Sigmoid colon (tissue), 7 donors: ENCODE measurements at regions of chr11 and their contacts with region 1.

Region 1: GRCh38 chr11:57530596-57531507 is at the start of gene TIMM10:
- DNase-seq: peak; percentile 98
- H3K4me3 ChIP-seq: peak within 1 kb of the TSS; percentile 55 to 78 (median 60)
- H3K27ac ChIP-seq: peak within 1 kb of the TSS; percentile 61 to 78 (median 70)
- H3K4me1 ChIP-seq: peaks cover 0 to 18% (median 11%) of the 10 kb centered on the region in 4 donors
- H3K27me3 ChIP-seq: no peaks in the 10 kb centered on the region
- CTCF ChIP-seq: no peak
- EP300 ChIP-seq: no peak
- POLR2A ChIP-seq: peak in 1 of 2 donors; percentile 37
- total RNA-seq, gene TIMM10: 22.4 to 59.7 (median 33.0) TPM

Region 2: GRCh38 chr11:56910785-56911184 is 620.1 kb before region 1 on chr11:
- intact Hi-C with region 1: no loop called
- DNase-seq: no peak
- H3K4me3 ChIP-seq: no peak overlapping the region
- H3K27ac ChIP-seq: no peak overlapping the region
- H3K4me1 ChIP-seq: no peaks in the 10 kb centered on the region
- H3K27me3 ChIP-seq: no peaks in the 10 kb centered on the region
- CTCF ChIP-seq: no peak
- EP300 ChIP-seq: no peak
- POLR2A ChIP-seq: no peak

Region 3: DNA sequence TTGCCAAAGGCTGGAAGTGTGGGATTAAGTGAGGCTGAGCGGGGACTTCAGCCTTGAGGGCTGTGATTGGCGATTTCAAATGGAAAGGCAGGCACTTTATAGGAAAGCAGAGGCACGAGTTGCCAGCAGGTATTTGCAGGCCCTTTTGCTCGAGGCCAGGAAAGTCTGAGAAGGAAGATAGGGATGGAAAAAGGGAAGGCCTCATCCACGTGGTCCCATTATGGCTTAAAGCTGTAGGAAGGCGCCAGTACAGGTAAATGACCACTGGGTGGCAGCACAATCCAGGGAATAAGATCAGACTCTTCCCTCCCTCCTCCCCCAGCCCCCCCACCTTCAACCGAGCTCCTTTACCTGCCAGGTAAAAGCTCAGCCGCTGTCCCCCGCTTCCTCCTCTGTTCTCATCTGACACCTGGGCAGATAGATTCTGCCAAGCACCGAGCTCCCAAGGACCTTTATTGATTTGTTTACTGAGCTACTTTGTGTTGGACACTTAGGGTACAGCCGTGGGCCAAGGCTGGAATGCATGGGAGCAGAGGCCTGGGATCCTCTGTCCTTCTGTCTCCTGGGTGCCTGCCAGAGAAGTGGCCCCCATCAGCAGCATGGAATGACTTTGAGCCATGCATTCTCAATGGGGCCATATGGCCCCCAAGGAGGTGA is 185.2 kb before region 1 on chr11:
- intact Hi-C with region 1: loop called (anchors 2 kb)
- DNase-seq: peak; percentile 80
- H3K4me3 ChIP-seq: no peak overlapping the region
- H3K27ac ChIP-seq: no peak overlapping the region
- H3K4me1 ChIP-seq: peaks cover 0 to 7% (median 5%) of the 10 kb centered on the region in 4 donors
- H3K27me3 ChIP-seq: peaks cover 0 to 4% (median 0%) of the 10 kb centered on the region in 3 donors
- CTCF ChIP-seq: peak in 3 of 4 experiments; percentile 31 to 84 (median 46)
- EP300 ChIP-seq: no peak
- POLR2A ChIP-seq: no peak

Region 4: DNA sequence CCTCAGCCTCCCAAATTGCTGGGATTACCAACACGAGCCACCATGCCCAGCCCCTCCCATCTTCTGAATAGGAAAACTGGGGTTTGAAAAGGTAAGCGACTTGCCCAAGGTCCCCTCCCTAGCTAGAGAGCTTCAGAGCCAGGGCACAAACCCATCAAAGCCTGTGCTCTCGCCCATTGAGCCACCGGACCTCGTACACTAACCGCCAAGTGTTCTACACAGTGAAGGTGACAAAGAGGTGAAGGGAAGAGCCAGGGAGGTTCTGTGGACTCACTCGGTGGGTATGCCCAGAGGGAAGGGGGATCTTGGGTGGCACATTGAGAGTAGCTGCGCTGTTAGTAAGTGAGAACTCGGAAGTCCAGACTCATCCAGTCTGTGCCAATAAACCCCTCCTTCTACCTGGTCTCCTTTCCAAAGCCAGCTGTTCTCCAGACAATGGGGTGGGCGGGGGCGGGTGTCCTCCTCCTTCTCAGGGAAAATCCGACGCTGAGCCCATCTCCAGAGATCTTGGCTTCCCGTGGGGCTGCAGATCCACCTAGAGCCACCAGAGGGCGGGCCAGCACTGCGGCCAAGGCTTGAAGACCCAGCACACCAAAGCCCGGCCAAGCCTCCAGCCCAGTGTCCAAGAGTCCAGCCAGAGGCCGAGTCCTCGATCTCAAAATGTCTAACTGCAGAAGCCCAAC is 73.8 kb before region 1 on chr11:
- intact Hi-C with region 1: loop called (anchors 1 kb)
- DNase-seq: peak; percentile 94
- H3K4me3 ChIP-seq: no peak overlapping the region
- H3K27ac ChIP-seq: no peak overlapping the region
- H3K4me1 ChIP-seq: peaks cover 0 to 45% (median 42%) of the 10 kb centered on the region in 4 donors
- H3K27me3 ChIP-seq: peaks cover 34 to 60% (median 38%) of the 10 kb centered on the region in 3 donors
- CTCF ChIP-seq: peak; percentile 87 to 99 (median 92)
- EP300 ChIP-seq: no peak
- POLR2A ChIP-seq: no peak

Region 5: DNA sequence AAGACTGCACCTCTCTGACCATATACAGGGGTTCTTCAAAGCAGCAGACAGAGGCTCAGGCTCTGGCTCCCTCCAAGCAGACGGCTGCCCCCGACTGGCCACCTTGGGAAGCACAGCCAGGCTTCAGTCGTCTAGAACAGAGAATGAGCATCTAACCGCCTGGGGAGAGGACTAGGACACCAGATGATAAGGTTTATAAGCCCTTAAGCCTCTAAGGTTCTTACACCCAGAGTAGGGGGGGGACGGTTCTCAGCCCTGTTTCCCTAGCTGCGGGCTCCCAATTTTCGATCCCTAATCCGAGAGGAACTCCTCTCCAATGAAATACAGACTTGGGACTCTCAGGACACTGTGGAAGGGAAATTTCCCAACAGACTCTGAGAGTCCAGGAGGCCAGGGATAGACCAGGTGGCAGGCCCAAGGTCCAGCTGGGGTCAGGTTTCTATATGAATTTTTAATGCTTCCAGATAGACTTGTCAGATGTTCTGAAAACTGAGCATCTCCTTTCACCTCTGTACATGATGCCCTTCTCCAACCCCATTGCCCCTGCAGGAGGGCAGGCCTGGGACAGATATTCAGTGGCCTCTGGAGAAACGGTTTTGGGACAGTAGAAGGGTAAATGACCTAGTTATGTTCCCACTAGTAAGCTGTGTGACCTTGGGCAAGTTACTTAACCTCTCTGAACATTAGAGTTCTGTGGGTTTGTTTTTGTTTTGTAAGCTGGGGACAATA is 50.3 kb before region 1 on chr11:
- intact Hi-C with region 1: no loop called
- DNase-seq: no peak
- H3K4me3 ChIP-seq: no peak overlapping the region
- H3K27ac ChIP-seq: no peak overlapping the region
- H3K4me1 ChIP-seq: peaks cover 0 to 30% (median 24%) of the 10 kb centered on the region in 4 donors
- H3K27me3 ChIP-seq: peaks cover 15 to 46% (median 29%) of the 10 kb centered on the region in 3 donors
- CTCF ChIP-seq: peak in 3 of 4 experiments; percentile 36 to 60 (median 39)
- EP300 ChIP-seq: no peak
- POLR2A ChIP-seq: no peak

Region 6: GRCh38 chr11:57493507-57494503 is 37.0 kb before region 1 on chr11:
- intact Hi-C with region 1: loop called (anchors 1 kb)
- DNase-seq: peak; percentile 81
- H3K4me3 ChIP-seq: no peak overlapping the region
- H3K27ac ChIP-seq: no peak overlapping the region
- H3K4me1 ChIP-seq: peaks cover 2 to 6% (median 3%) of the 10 kb centered on the region in 4 donors
- H3K27me3 ChIP-seq: no peaks in the 10 kb centered on the region
- CTCF ChIP-seq: peak; percentile 58 to 89 (median 74)
- EP300 ChIP-seq: no peak
- POLR2A ChIP-seq: no peak

Region 7: DNA sequence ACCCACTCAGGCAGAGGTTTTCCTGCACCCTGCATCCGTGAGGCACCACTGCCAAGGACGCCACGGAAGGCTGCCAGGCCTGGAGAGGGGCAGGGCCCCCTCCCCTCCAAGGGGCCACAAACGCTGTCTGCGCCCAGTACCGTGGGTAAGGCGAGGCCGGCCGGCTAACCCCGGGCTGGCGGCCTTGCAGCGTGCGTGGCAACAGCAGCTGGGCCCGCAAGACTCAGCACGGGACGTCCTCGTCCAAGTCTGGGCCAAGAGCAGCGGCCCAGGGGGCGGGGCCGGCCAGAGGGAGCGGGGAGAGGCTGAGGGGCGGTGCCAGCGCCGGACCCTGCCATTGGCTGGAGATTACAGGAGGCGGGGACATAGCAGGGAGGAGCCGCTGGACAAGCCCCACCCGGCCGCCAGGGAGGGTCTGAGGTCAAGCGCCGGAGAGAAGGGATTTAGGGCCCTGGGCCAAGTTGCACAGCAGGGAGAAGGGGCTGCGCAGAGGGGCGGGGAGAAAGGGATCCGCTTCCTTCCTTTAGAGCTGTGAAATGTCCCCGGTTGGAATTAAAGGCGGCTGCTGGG is 31.4 kb before region 1 on chr11:
- intact Hi-C with region 1: loop called (anchors 2 kb)
- DNase-seq: peak; percentile 99
- H3K4me3 ChIP-seq: peak overlapping the region; percentile 9 to 43 (median 34)
- H3K27ac ChIP-seq: peak overlapping the region; percentile 77 to 80 (median 80)
- H3K4me1 ChIP-seq: peaks cover 0 to 23% (median 19%) of the 10 kb centered on the region in 4 donors
- H3K27me3 ChIP-seq: no peaks in the 10 kb centered on the region
- CTCF ChIP-seq: no peak
- EP300 ChIP-seq: peak in 1 of 4 donors; percentile 56
- POLR2A ChIP-seq: no peak

Region 8: GRCh38 chr11:57511741-57512430 is 19.0 kb before region 1 on chr11:
- intact Hi-C with region 1: no loop called
- DNase-seq: no peak
- H3K4me3 ChIP-seq: no peak overlapping the region
- H3K27ac ChIP-seq: no peak overlapping the region
- H3K4me1 ChIP-seq: peaks cover 0 to 18% (median 17%) of the 10 kb centered on the region in 4 donors
- H3K27me3 ChIP-seq: no peaks in the 10 kb centered on the region
- CTCF ChIP-seq: no peak
- EP300 ChIP-seq: no peak
- POLR2A ChIP-seq: no peak

Region 9: GRCh38 chr11:57597916-57598830 is 67.3 kb after region 1 on chr11:
- intact Hi-C with region 1: loop called (anchors 2 kb)
- DNase-seq: peak; percentile 95
- H3K4me3 ChIP-seq: peak overlapping the region; percentile 48 to 76 (median 64)
- H3K27ac ChIP-seq: peak overlapping the region; percentile 79 to 93 (median 89)
- H3K4me1 ChIP-seq: peaks cover 0 to 22% (median 13%) of the 10 kb centered on the region in 4 donors
- H3K27me3 ChIP-seq: no peaks in the 10 kb centered on the region
- CTCF ChIP-seq: no peak
- EP300 ChIP-seq: no peak
- POLR2A ChIP-seq: no peak